ENCODE measurements at regions of chr2 and their contacts with region 1.

Region 1: GRCh38 chr2:85468704-85469349 is 50.3 kb downstream of the SH2D6 start:
- DNase-seq: peak; percentile 69
- H3K4me3 ChIP-seq: no peak overlapping the region
- H3K27ac ChIP-seq: no peak overlapping the region
- H3K4me1 ChIP-seq: peaks cover 29% of the 10 kb centered on the region
- H3K27me3 ChIP-seq: no peaks in the 10 kb centered on the region
- CTCF ChIP-seq: no peak

Region 2: GRCh38 chr2:85433511-85434089 is 35.2 kb before region 1 on chr2:
- CTCF ChIA-PET with region 1: no interaction called
- dilution Hi-C with region 1: no loop called
- in situ Hi-C with region 1: no loop called
- intact Hi-C with region 1: loop called (anchors 5 kb)
- DNase-seq: peak; percentile 92
- H3K4me3 ChIP-seq: no peak overlapping the region
- H3K27ac ChIP-seq: peak overlapping the region; percentile 29
- H3K4me1 ChIP-seq: peaks cover 33% of the 10 kb centered on the region
- H3K27me3 ChIP-seq: no peaks in the 10 kb centered on the region
- CTCF ChIP-seq: no peak

Region 3: GRCh38 chr2:85504778-85505323 is 36.0 kb after region 1 on chr2:
- CTCF ChIA-PET with region 1: no interaction called
- dilution Hi-C with region 1: no loop called
- in situ Hi-C with region 1: no loop called
- intact Hi-C with region 1: loop called (anchors 1 kb)
- DNase-seq: peak; percentile 99
- H3K4me3 ChIP-seq: no peak overlapping the region
- H3K27ac ChIP-seq: peak overlapping the region; percentile 73
- H3K4me1 ChIP-seq: peaks cover 41% of the 10 kb centered on the region
- H3K27me3 ChIP-seq: no peaks in the 10 kb centered on the region
- CTCF ChIP-seq: no peak

Measured in mammary epithelial cell (primary cell).